ENCODE measurements at regions of chr10 and their contacts with region 1.

Region 1: GRCh38 chr10:96374985-96375830 is 16.4 kb upstream of the OPALIN start:
- DNase-seq: peak; percentile 93
- H3K4me3 ChIP-seq: peak overlapping the region; percentile 72
- H3K27ac ChIP-seq: no peak overlapping the region
- H3K4me1 ChIP-seq: peaks cover 7% of the 10 kb centered on the region; the same call in 1 of the 2 replicates
- H3K27me3 ChIP-seq: no peaks in the 10 kb centered on the region; the same call in 1 of the 2 replicates

Region 2: DNA sequence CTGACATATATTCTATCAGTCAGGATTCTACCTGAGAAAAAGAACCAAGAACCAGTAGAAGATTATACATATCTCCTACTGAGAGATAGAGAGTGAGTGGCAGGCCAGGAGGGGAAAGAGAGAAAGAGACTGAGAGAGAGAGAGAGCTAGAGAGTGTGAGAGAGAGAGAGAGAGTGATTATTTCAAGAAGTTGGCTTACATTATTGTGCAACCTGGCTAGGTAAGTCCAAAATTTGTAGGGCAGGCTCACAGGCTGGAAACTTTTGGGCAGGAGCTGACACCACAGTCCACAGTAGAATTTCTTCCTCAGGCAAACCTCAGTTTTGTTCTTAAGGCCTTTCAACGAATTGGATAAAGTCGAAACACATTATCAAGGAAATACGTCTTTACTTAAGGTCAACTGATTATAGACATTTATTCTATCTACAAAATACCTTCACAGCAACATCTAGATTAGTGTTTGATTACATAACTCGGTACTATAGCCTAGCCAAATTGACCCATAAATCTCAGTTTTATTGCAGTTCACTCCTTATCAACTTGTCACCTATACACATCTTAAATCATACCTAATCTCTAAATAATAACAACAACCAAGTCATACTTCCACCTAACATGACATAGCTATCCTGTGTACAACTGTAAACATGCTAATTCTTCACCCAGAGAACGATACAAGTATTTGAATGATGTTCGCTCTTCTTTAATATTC is 1708.7 kb before region 1 on chr10:
- in situ Hi-C with region 1: no loop called
- DNase-seq: no peak
- H3K4me3 ChIP-seq: no peak overlapping the region
- H3K27ac ChIP-seq: no peak overlapping the region
- H3K4me1 ChIP-seq: no peaks in the 10 kb centered on the region
- H3K27me3 ChIP-seq: no peaks in the 10 kb centered on the region

Region 3: GRCh38 chr10:95860166-95860940 is 514.9 kb before region 1 on chr10:
- in situ Hi-C with region 1: no loop called
- DNase-seq: peak; percentile 38
- H3K4me3 ChIP-seq: no peak overlapping the region
- H3K27ac ChIP-seq: no peak overlapping the region
- H3K4me1 ChIP-seq: peaks cover 1% of the 10 kb centered on the region; the same call in 1 of the 2 replicates
- H3K27me3 ChIP-seq: no peaks in the 10 kb centered on the region

Region 4: DNA sequence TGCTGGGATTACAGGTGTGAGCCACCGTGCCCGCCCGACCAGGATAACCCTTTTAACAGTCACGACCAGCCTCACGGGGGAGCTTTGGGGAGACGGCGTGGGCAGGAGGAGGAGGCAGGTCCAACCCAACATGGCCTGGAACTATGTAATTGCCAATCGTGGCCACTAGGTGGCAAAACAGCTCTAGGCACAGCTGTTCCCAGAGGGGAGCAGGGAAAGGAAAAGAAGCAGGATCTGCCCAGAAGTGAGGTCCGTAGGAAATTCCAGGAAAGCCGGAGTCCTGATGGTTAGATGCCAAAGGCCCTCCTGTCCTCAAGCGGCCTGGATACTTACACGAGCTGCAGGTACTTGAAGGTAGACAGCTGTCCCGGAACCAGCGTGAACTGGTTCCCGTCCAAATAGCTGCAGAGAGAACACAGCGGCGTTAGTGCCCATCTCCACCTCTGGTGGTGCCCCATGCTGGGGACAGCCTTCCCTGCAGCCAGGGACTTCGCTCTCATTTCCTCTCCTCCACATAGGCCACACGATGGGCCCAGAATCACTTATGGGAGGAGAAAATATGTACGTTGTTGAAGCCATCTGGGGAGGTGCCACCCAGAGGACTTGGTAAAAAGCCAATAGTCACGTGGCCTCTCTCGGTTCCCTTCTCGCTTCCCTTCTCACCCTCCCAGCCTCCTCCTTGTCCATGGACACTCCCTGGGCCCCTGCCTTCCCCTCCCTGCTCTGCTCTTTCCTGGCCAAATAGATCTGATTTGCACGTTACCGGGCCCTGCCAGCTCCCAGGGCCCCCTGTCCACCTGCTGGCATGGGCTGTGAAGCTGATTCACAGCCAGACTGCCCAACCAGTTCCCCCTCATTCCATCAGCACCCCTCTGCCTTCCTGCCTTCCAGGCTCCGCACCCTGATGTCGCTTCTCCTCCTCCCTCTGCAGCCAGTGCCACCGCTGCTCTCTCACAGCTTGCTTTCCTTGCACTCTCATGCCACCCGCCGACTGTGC is 662.5 kb after region 1 on chr10:
- in situ Hi-C with region 1: loop called (anchors 25 kb)
- DNase-seq: peak; percentile 81
- H3K4me3 ChIP-seq: peak overlapping the region; percentile 65
- H3K27ac ChIP-seq: no peak overlapping the region
- H3K4me1 ChIP-seq: no peaks in the 10 kb centered on the region
- H3K27me3 ChIP-seq: peaks cover 12% of the 10 kb centered on the region

Region 5: GRCh38 chr10:97210543-97210961 is 835.3 kb after region 1 on chr10:
- in situ Hi-C with region 1: loop called (anchors 25 kb)
- DNase-seq: peak; percentile 56
- H3K4me3 ChIP-seq: no peak overlapping the region
- H3K27ac ChIP-seq: no peak overlapping the region
- H3K4me1 ChIP-seq: no peaks in the 10 kb centered on the region
- H3K27me3 ChIP-seq: 0 out of 2 replicates have a peak, but pooled peaks cover 14% of the 10 kb centered on the region

Measured in GM23248 (cell line).